RWPE1 (cell line): ENCODE measurements at regions of chr19 and their contacts with region 1.

Region 1: GRCh38 chr19:1672038-1672768 is 19.8 kb upstream of the TCF3 start:
- DNase-seq: peak; percentile 54
- H3K27ac ChIP-seq: 0 out of 2 replicates have a peak overlapping the region, but pooled peaks have one; percentile 9
- CTCF ChIP-seq: peak; percentile 94

Region 2: GRCh38 chr19:1551068-1552040 is 120.8 kb before region 1 on chr19:
- CTCF ChIA-PET with region 1: interaction called, 41 read pairs
- POLR2A ChIA-PET with region 1: no interaction called
- DNase-seq: no peak
- H3K27ac ChIP-seq: no peak overlapping the region; the same call in 1 of the 2 replicates
- CTCF ChIP-seq: no peak

Region 3: GRCh38 chr19:1683869-1684572 is 11.8 kb after region 1 on chr19:
- CTCF ChIA-PET with region 1: interaction called, 12 read pairs
- POLR2A ChIA-PET with region 1: no interaction called
- DNase-seq: no peak
- H3K27ac ChIP-seq: no peak overlapping the region
- CTCF ChIP-seq: no peak

Region 4: DNA sequence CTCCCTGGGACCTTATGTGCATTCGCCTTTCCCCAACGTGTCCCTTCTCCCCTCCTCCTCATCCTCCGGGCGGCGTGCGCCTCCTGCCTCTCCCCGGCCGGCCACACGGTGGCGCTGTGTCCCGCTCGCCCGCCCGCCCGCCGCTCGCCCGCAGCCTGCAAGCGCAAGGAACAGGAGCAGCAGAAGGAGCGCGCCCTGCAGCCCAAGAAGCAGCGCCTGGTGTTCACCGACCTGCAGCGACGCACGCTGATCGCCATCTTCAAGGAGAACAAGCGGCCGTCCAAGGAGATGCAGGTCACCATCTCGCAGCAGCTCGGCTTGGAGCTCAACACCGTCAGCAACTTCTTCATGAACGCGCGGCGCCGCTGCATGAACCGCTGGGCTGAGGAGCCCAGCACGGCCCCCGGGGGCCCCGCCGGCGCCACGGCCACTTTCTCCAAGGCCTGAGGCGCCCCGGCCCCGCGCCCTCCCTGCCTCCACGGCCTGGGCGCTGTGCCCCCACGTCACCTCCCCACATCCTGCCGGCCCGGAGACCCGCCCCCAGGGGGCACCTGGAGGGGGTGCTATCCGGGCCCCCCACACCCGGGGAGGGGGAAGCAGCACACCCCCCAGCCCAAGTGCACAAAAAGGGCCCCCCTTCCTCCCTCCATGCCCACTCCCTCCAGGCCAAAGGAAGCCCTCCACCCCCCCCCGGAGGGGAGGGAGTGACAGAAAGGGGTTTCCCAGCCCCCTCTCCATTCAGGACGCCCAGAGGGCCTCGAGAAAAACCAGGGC is 103.0 kb after region 1 on chr19:
- CTCF ChIA-PET with region 1: interaction called, 12 read pairs
- POLR2A ChIA-PET with region 1: no interaction called
- DNase-seq: peak; percentile 53
- H3K27ac ChIP-seq: peak overlapping the region; percentile 96
- CTCF ChIP-seq: peak; percentile 78

Region 5: GRCh38 chr19:1794424-1795172 is 122.4 kb after region 1 on chr19:
- CTCF ChIA-PET with region 1: interaction called, 70 read pairs
- POLR2A ChIA-PET with region 1: no interaction called
- DNase-seq: no peak
- H3K27ac ChIP-seq: peak overlapping the region; percentile 48
- CTCF ChIP-seq: no peak